HCT116 (cell line): ENCODE measurements at regions of chr5 and their contacts with region 1.

Region 1: DNA sequence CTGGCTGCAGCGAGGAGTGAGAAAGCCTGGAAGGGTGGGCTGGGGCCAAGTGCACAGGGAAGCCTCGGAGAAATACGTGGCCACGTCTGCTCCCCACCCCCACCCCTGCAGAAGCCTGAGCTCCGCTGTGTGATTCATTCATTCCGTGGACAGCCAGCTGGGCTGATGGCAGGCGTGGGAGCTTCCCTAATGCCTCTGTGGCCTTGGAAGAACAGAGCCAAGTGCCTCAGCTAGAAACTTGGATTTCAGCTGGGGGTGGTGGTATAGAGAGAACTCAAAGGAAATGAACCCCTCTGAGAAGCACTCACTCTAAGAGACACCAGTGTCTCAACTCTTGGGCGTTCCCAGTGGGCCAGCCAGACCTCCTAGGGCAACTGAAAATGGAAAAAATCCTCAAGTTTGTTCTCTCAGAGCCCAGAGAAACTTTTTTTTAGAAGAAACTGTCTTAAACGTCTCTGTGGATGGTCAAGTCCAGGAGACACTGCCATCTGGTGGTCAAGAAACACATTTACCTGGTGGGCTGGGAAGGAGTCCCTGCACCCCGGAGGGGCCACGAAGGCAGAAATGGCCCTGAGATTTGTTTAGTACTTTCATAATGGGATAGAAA is 18.0 kb downstream of the ATOX1 start:
- DNase-seq: no peak
- ATAC-seq: peak; percentile 33
- H3K4me3 ChIP-seq: peak overlapping the region; percentile 4 to 46; a peak in 3 of 4 replicates
- H3K27ac ChIP-seq: peak overlapping the region; percentile 27
- H3K4me1 ChIP-seq: peaks cover 50 to 63% of the 10 kb centered on the region in 2 experiments
- H3K27me3 ChIP-seq: no peaks in the 10 kb centered on the region
- CTCF ChIP-seq: peak in 2 of 3 experiments; percentile 82 to 96; a peak in 4 of 6 replicates
- POLR2A ChIP-seq: no peak
- RAD21 ChIP-seq: no peak

Region 2: GRCh38 chr5:151252762-151253604 is 487.5 kb before region 1 on chr5 and contains the start of gene GM2A:
- CTCF ChIA-PET with region 1: no interaction called
- POLR2A ChIA-PET with region 1: no interaction called
- RAD21 ChIA-PET with region 1: no interaction called
- intact Hi-C with region 1: loop called (anchors 10 kb)
- DNase-seq: peak; percentile 99
- ATAC-seq: peak; percentile 98
- H3K4me3 ChIP-seq: peak within 1 kb of the TSS; percentile 70 to 83
- H3K27ac ChIP-seq: no peak within 1 kb of the TSS; the same call in 1 of the 2 replicates
- H3K4me1 ChIP-seq: peaks cover 3 to 34% of the 10 kb centered on the region in 2 experiments; a peak in 3 of 4 replicates
- H3K27me3 ChIP-seq: no peaks in the 10 kb centered on the region
- CTCF ChIP-seq: no peak
- POLR2A ChIP-seq: peak; percentile 39
- RAD21 ChIP-seq: no peak
- total RNA-seq, gene GM2A: 25.0 TPM

Region 3: GRCh38 chr5:151315998-151316597 is 424.3 kb before region 1 on chr5:
- CTCF ChIA-PET with region 1: interaction called, 3 read pairs
- POLR2A ChIA-PET with region 1: no interaction called
- RAD21 ChIA-PET with region 1: no interaction called
- intact Hi-C with region 1: loop called (anchors 5 kb)
- DNase-seq: peak; percentile 37
- ATAC-seq: peak; percentile 91
- H3K4me3 ChIP-seq: no peak overlapping the region
- H3K27ac ChIP-seq: no peak overlapping the region
- H3K4me1 ChIP-seq: no peaks in the 10 kb centered on the region
- H3K27me3 ChIP-seq: no peaks in the 10 kb centered on the region
- CTCF ChIP-seq: peak; percentile 86 to 95 (median 93)
- POLR2A ChIP-seq: no peak
- RAD21 ChIP-seq: peak; percentile 89

Region 4: DNA sequence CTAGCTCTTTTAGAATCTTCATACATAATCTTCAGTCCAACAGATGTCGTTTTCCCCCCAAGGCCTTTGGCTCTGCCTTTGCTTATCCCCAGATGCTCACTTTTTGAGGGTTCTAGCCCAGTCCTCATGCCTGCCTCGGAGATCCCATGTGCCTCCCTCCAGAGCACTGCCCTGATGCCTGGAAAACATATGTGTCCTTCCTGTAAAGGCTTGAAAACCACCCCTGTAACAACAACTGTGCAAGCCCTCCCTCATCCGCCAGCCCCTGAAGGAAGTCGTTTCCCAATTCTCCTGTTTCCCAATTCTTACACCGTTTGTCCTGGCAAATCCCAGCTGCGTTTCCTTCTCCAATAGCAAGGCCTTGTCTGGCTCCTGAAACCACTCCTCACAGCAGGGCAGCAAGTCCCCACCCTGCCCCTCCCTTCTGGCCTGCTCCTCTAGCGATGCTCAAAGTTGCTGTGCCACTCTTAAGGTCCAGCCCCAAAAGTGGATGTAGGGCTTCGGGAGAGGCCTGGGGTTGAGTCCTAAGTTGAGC is 240.9 kb before region 1 on chr5:
- CTCF ChIA-PET with region 1: no interaction called
- POLR2A ChIA-PET with region 1: no interaction called
- RAD21 ChIA-PET with region 1: no interaction called
- intact Hi-C with region 1: loop called (anchors 2 kb)
- DNase-seq: no peak
- ATAC-seq: no peak
- H3K4me3 ChIP-seq: no peak overlapping the region
- H3K27ac ChIP-seq: no peak overlapping the region
- H3K4me1 ChIP-seq: peaks cover 0 to 2% of the 10 kb centered on the region in 2 experiments; a peak in 1 of 4 replicates
- H3K27me3 ChIP-seq: no peaks in the 10 kb centered on the region
- CTCF ChIP-seq: no peak
- POLR2A ChIP-seq: no peak
- RAD21 ChIP-seq: no peak

Region 5: GRCh38 chr5:151651997-151652645 is 88.3 kb before region 1 on chr5:
- CTCF ChIA-PET with region 1: interaction called, 103 read pairs
- POLR2A ChIA-PET with region 1: interaction called, 3 read pairs
- RAD21 ChIA-PET with region 1: interaction called, 3 to 7 read pairs
- intact Hi-C with region 1: no loop called
- DNase-seq: peak; percentile 64
- ATAC-seq: peak; percentile 99
- H3K4me3 ChIP-seq: no peak overlapping the region
- H3K27ac ChIP-seq: no peak overlapping the region
- H3K4me1 ChIP-seq: no peaks in the 10 kb centered on the region; a peak in 1 of 4 replicates
- H3K27me3 ChIP-seq: no peaks in the 10 kb centered on the region
- CTCF ChIP-seq: peak; percentile 89 to 94 (median 93)
- POLR2A ChIP-seq: no peak
- RAD21 ChIP-seq: peak; percentile 98

Region 6: GRCh38 chr5:151771259-151772028 is 31.0 kb after region 1 on chr5 and contains the start of gene G3BP1:
- CTCF ChIA-PET with region 1: interaction called, 7 read pairs
- POLR2A ChIA-PET with region 1: interaction called, 4 read pairs
- RAD21 ChIA-PET with region 1: interaction called in 1 of 2 experiments, 4 read pairs
- intact Hi-C with region 1: loop called (anchors 1 kb)
- DNase-seq: peak; percentile 100
- ATAC-seq: peak; percentile 86
- H3K4me3 ChIP-seq: peak within 1 kb of the TSS; percentile 79 to 97
- H3K27ac ChIP-seq: peak within 1 kb of the TSS; percentile 97
- H3K4me1 ChIP-seq: peaks cover 10 to 26% of the 10 kb centered on the region in 2 experiments; a peak in 3 of 4 replicates
- H3K27me3 ChIP-seq: no peaks in the 10 kb centered on the region
- CTCF ChIP-seq: peak in 2 of 3 experiments; percentile 58 to 64; a peak in 4 of 6 replicates
- POLR2A ChIP-seq: peak; percentile 96
- RAD21 ChIP-seq: no peak
- total RNA-seq, gene G3BP1: 296 TPM

Region 7: DNA sequence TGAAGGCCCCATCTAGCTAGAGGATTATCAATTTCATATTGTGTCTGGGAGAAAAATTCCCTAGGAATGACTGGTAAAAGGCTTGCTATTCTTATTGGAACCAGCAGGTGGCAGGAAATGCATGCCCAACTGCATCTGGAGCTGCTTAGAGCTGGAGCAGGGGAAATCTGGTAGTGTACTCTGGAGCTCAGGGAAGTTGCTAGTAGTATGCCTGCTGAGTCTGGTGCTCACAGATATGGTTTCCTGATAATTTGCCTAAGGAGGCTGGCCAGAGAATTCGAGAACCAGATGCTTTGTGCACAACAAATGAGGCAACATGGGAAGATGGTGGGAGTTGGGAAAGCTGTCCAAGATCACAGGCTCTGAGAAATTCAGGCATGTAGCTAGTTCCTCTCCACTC is 85.0 kb after region 1 on chr5:
- CTCF ChIA-PET with region 1: no interaction called
- POLR2A ChIA-PET with region 1: no interaction called
- RAD21 ChIA-PET with region 1: no interaction called
- intact Hi-C with region 1: no loop called
- DNase-seq: peak; percentile 36
- ATAC-seq: peak; percentile 83
- H3K4me3 ChIP-seq: no peak overlapping the region
- H3K27ac ChIP-seq: no peak overlapping the region
- H3K4me1 ChIP-seq: no peaks in the 10 kb centered on the region
- H3K27me3 ChIP-seq: no peaks in the 10 kb centered on the region
- CTCF ChIP-seq: peak; percentile 71 to 89 (median 84); a peak in 5 of 6 replicates
- POLR2A ChIP-seq: no peak
- RAD21 ChIP-seq: peak; percentile 89

Region 8: DNA sequence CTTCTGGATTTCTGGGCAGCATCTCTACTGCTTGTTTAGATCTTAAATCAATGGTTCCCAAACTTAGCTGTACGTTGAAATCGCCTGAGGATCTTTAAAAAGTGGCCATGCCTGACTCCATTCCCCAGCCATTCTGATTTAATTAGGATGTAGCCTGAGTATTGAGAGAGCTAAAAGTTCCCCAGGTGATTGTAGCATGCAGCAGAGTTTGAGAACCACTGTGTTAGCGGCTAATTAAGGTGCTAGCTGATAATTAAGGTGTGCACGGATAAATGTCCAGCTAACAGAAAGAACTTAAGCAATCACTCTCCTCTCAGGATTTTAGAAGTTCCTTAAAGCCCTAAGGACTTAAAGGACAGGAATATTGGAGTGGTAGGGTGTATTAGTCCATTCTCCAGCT is 575.5 kb after region 1 on chr5:
- CTCF ChIA-PET with region 1: no interaction called
- POLR2A ChIA-PET with region 1: no interaction called
- RAD21 ChIA-PET with region 1: no interaction called
- intact Hi-C with region 1: no loop called
- DNase-seq: no peak
- ATAC-seq: no peak
- H3K4me3 ChIP-seq: no peak overlapping the region
- H3K27ac ChIP-seq: no peak overlapping the region
- H3K4me1 ChIP-seq: no peaks in the 10 kb centered on the region
- H3K27me3 ChIP-seq: peaks cover 1% of the 10 kb centered on the region
- CTCF ChIP-seq: no peak
- POLR2A ChIP-seq: no peak
- RAD21 ChIP-seq: no peak